Activated CD8-positive, alpha-beta T cell treated with anti-CD3 and anti-CD28 coated beads, Interleukin-2, amount 10 ng/mL, durations not matched to agents 7 days and 5 days (primary cell): ENCODE measurements at regions of chr10 and their contacts with region 1.

Region 1: DNA sequence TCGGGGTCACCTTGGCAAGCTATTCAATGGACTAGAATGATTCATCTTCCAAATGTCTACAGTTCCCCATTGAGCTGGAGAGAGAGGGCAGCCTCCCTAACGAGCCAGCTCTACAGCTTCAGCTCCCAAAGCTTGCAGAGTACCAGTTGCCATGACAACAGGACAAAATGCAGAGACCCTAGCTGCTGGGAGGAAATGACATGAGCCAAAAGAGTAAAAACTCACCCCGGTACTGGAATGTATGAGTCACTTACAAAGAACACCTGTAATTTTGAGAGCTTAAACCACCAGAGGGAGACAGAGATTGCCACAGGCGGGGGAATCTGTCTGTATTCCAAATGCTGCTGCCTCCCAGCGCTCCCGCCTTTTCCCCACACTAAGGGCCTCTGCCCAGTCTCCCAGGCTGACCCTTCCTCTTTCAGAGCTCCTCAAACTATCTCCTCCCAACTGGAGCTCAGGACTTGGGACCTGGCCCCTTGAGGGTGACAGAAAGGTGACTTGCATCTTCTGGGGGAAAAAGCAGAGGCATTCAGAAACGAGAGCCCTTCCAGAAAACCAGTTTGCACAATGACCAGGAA is 95.5 kb downstream of the CUL2 start:
- DNase-seq: peak; percentile 71
- ATAC-seq: peak; percentile 90
- H3K4me3 Mint-ChIP-seq: no peak overlapping the region
- H3K27ac Mint-ChIP-seq: no peak overlapping the region
- H3K4me1 Mint-ChIP-seq: peaks cover 18% of the 10 kb centered on the region
- H3K27me3 Mint-ChIP-seq: no peaks in the 10 kb centered on the region

Region 2: GRCh38 chr10:35027567-35027966 is 32.9 kb after region 1 on chr10:
- CTCF ChIA-PET with region 1: interaction called, 14 read pairs
- POLR2A ChIA-PET with region 1: no interaction called
- DNase-seq: no peak
- ATAC-seq: no peak
- H3K4me3 Mint-ChIP-seq: no peak overlapping the region
- H3K27ac Mint-ChIP-seq: no peak overlapping the region
- H3K4me1 Mint-ChIP-seq: no peaks in the 10 kb centered on the region
- H3K27me3 Mint-ChIP-seq: no peaks in the 10 kb centered on the region

Region 3: DNA sequence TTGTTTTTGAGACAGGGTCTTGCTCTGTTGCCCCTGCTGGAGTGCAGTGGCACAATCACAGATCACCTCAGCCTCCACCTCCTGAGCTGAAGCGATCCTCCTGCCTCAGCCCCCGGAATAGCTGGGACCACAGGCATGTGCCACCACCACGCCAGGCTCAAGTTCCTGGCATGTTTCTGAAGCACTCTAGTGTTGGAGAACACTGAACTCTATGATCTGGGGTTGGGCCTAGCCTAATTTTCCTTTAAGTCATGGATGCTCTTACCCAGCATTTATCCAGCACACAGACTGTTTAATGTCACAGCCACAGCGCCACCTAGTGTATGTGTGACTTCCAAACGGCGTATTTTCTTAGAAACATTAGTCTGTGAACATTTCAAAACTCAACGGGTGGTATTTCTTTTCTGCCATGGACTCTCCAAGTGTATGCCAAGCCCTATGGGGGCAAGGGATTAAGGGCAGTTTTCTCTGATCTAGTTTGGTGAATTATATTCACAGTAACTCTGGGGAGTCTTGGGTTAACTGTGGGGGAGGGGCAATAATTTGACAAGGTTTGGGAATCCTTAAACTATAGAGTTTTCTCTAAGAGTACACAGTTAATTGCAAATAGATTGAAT is 223.8 kb after region 1 on chr10:
- CTCF ChIA-PET with region 1: interaction called, 21 read pairs
- POLR2A ChIA-PET with region 1: no interaction called
- DNase-seq: peak; percentile 93
- ATAC-seq: peak; percentile 81
- H3K4me3 Mint-ChIP-seq: no peak overlapping the region
- H3K27ac Mint-ChIP-seq: peak overlapping the region; percentile 85
- H3K4me1 Mint-ChIP-seq: peaks cover 40% of the 10 kb centered on the region
- H3K27me3 Mint-ChIP-seq: no peaks in the 10 kb centered on the region